Calu3 (cell line): ENCODE measurements at regions of chr1 and their contacts with region 1.

Region 1: GRCh38 chr1:174704300-174704699 is 256.5 kb downstream of the GPR52 start:
- DNase-seq: no peak
- H3K4me3 Mint-ChIP-seq: no peak overlapping the region
- H3K27ac Mint-ChIP-seq: no peak overlapping the region
- H3K4me1 Mint-ChIP-seq: no peaks in the 10 kb centered on the region
- H3K27me3 Mint-ChIP-seq: no peaks in the 10 kb centered on the region
- CTCF ChIP-seq: no peak

Region 2: DNA sequence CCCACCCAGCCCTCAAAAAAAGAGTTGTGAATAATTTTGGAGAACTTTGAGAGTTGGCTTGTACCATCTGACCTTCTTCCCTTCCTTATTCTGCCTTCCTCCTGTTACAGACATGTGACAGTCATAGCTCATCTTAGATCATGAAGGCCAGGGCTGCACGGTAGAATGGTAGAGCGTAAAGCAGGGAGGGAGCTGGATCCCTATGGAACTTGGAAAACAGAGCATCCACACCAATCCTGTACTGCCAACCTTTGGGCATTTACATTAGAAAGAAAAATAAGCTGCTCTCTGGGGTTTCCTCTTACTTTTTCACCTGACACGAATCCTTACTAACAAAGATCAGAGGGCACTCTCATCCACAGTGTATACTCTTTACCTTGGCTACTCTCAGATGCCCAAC is 135.1 kb before region 1 on chr1:
- CTCF ChIA-PET with region 1: interaction called, 12 read pairs
- intact Hi-C with region 1: no loop called
- DNase-seq: no peak
- H3K4me3 Mint-ChIP-seq: no peak overlapping the region
- H3K27ac Mint-ChIP-seq: no peak overlapping the region
- H3K4me1 Mint-ChIP-seq: no peaks in the 10 kb centered on the region
- H3K27me3 Mint-ChIP-seq: no peaks in the 10 kb centered on the region
- CTCF ChIP-seq: no peak